ENCODE measurements at regions of chr18 and their contacts with region 1.

Region 1: DNA sequence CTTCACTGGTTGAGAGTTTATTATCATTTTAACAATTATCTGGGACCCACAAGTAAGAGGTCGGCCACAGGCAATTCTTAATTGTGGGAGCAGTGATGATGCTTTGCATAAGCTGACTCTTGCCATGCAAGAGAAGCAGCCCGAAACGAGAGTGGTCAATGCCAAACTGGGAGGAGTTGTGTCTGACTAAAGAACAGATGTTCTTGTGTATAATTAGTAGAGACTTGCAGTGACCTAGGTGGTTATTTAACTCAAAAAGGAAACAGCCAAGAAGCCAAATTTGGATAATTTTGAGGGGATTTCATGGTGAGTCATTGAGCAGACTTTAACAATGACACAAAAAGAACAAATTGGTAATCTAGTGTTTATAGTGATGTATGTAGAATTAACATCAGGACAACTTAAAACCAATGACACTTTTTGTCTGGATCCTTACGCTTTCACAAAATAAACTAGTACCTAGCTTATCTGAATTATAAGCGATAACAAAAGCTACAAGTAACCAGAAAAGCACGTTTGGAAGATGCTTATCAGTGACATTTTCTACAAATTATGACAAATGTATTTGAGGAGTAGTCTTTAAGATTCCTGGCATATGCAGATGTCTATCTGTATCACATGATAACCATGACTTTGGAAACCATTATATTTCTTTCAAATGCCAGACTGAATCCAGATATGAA is 184.7 kb upstream of the DLGAP1 start:
- DNase-seq: no peak

Region 2: DNA sequence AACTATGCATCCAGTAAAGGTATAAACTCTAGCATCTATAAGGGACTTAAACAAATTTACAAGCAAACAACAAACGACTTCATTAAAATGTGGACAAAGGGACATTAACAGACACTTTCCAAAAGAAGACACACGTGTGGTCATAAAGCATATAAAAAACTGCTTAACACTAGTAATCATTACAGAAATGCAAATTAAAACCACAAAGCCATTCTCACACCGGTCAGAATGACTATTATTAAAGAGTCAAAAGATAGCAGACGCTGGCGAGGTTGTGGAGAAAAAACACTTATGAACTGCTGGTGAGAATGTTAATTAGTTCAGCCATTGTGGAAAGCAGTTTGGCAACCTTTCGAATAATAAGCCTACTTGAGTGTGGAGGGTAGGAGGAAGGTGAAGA is 32.4 kb after region 1 on chr18:
- intact Hi-C with region 1: loop called in 1 of 2 experiments (anchors 1 kb)
- DNase-seq: no peak